PC-3 (cell line): ENCODE measurements at regions of chr12 and their contacts with region 1.

Region 1: DNA sequence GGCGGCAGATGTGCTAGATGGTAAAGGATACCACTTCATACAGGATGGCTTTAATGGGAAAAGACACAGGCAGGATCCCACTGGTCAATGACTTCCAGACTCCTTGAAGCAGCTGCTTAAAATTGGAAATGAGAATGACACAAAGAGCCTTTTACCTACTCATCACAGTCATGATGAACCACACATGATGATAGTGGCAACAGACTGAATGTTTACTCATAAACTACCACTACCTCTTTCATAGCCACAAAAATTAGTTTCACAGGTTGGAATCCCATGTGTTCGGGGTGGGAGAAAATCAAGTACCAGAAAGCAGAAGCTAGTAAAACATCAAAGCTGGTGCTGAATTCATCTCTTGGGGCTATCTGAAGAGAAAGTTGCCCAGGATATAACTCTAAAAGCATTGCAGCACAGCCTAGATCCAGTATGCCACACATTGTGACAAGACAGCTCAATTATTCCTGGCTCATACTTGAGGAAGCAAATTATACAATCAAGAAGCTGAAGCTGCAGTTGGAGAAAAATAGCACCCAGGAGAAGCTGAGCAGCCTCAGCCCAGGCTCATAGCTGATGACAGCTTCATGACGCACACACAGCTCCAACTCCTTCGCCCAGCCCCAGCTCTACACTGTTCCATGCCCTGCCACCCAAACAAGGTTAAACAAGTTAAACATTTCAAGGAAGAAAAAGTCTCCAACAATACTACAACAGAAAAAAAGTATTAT is 29.0 kb upstream of the C12orf50 start:
- DNase-seq: no peak
- ATAC-seq: peak; percentile 87
- H3K4me3 ChIP-seq: no peak overlapping the region
- H3K27ac ChIP-seq: peak overlapping the region; percentile 34; the same call in 1 of the 2 replicates
- H3K4me1 ChIP-seq: peaks cover 2% of the 10 kb centered on the region; the same call in 1 of the 2 replicates
- H3K27me3 ChIP-seq: no peaks in the 10 kb centered on the region
- CTCF ChIP-seq: no peak

Region 2: GRCh38 chr12:87870493-87871460 is 187.4 kb before region 1 on chr12:
- CTCF ChIA-PET with region 1: no interaction called
- POLR2A ChIA-PET with region 1: no interaction called
- intact Hi-C with region 1: no loop called
- DNase-seq: no peak
- ATAC-seq: no peak
- H3K4me3 ChIP-seq: no peak overlapping the region
- H3K27ac ChIP-seq: no peak overlapping the region
- H3K4me1 ChIP-seq: no peaks in the 10 kb centered on the region
- H3K27me3 ChIP-seq: no peaks in the 10 kb centered on the region
- CTCF ChIP-seq: no peak

Region 3: GRCh38 chr12:89280833-89281538 is 1222.8 kb after region 1 on chr12:
- CTCF ChIA-PET with region 1: no interaction called
- POLR2A ChIA-PET with region 1: interaction called, 15 read pairs
- intact Hi-C with region 1: no loop called
- DNase-seq: peak; percentile 29
- ATAC-seq: peak; percentile 85
- H3K4me3 ChIP-seq: no peak overlapping the region
- H3K27ac ChIP-seq: no peak overlapping the region
- H3K4me1 ChIP-seq: peaks cover 6% of the 10 kb centered on the region; the same call in 1 of the 2 replicates
- H3K27me3 ChIP-seq: no peaks in the 10 kb centered on the region
- CTCF ChIP-seq: no peak